Left ventricle myocardium superior (tissue), 1 donor: ENCODE measurements at regions of chr10 and their contacts with region 1.

Region 1: GRCh38 chr10:87656431-87657072 is 3.1 kb upstream of the PAPSS2 start:
- DNase-seq: no peak
- ATAC-seq: peak; percentile 15

Region 2: GRCh38 chr10:87734987-87735827 is 78.7 kb after region 1 on chr10:
- intact Hi-C with region 1: loop called (anchors 2 kb)
- DNase-seq: no peak
- ATAC-seq: peak; percentile 88